ENCODE measurements at regions of chr15 and their contacts with region 1.

Region 1: DNA sequence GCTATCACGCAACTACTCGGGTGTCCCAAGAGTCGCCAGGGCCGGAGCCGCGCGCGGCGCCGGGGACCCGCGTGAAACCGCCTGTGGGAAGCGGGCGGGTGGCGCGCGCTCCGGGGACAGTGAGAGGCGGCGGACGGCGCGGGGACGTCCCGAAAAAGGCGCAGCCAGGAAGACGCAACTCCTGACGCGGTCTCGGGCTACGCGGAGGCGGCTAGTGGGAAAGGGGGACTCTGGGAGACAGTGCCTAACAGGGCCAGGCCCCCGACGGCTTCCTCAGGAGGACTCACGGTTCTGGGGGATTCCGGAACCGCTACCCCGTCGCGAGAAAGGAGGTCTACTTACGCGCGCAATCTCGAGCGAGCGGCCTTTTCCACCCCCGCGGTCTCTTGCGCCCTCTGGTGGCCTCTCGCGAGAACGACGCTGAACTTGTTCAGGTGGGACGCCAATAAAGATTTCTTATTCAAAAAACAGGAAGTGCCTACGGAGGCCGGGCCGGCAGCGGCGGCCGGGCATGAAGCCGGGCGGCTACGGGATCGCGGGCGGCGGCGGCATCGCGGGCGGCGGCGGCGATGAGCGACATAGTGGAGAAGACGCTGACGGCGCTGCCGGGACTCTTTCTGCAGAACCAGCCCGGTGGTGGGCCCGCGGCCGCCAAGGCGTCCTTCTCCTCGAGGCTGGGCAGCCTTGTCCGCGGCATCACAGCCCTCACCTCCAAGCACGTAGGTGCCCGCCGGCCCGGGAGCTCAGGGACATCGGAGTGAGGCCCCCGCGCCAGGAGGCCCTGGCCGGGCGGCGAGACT is at the start of gene AP4E1:
- DNase-seq: peak; percentile 91
- H3K4me3 Mint-ChIP-seq: peak within 1 kb of the TSS; percentile 96
- H3K27ac Mint-ChIP-seq: peak within 1 kb of the TSS; percentile 98
- H3K4me1 Mint-ChIP-seq: peaks cover 15% of the 10 kb centered on the region
- H3K27me3 Mint-ChIP-seq: peaks cover 2% of the 10 kb centered on the region
- total RNA-seq, gene AP4E1: 15.8 and 17.0 TPM in 2 replicates

Region 2: GRCh38 chr15:49155110-49155833 is 1753.1 kb before region 1 on chr15 and contains the start of gene COPS2:
- intact Hi-C with region 1: loop called (anchors 5 kb)
- DNase-seq: peak; percentile 93
- H3K4me3 Mint-ChIP-seq: peak within 1 kb of the TSS; percentile 99
- H3K27ac Mint-ChIP-seq: peak within 1 kb of the TSS; percentile 99
- H3K4me1 Mint-ChIP-seq: peaks cover 47% of the 10 kb centered on the region
- H3K27me3 Mint-ChIP-seq: peaks cover 3% of the 10 kb centered on the region
- total RNA-seq, gene COPS2: 99.7 and 105 TPM in 2 replicates

Region 3: GRCh38 chr15:50247819-50248655 is 660.4 kb before region 1 on chr15:
- intact Hi-C with region 1: loop called (anchors 5 kb)
- DNase-seq: peak; percentile 59
- H3K4me3 Mint-ChIP-seq: peak overlapping the region; percentile 67
- H3K27ac Mint-ChIP-seq: peak overlapping the region; percentile 97
- H3K4me1 Mint-ChIP-seq: peaks cover 65% of the 10 kb centered on the region
- H3K27me3 Mint-ChIP-seq: no peaks in the 10 kb centered on the region

Region 4: DNA sequence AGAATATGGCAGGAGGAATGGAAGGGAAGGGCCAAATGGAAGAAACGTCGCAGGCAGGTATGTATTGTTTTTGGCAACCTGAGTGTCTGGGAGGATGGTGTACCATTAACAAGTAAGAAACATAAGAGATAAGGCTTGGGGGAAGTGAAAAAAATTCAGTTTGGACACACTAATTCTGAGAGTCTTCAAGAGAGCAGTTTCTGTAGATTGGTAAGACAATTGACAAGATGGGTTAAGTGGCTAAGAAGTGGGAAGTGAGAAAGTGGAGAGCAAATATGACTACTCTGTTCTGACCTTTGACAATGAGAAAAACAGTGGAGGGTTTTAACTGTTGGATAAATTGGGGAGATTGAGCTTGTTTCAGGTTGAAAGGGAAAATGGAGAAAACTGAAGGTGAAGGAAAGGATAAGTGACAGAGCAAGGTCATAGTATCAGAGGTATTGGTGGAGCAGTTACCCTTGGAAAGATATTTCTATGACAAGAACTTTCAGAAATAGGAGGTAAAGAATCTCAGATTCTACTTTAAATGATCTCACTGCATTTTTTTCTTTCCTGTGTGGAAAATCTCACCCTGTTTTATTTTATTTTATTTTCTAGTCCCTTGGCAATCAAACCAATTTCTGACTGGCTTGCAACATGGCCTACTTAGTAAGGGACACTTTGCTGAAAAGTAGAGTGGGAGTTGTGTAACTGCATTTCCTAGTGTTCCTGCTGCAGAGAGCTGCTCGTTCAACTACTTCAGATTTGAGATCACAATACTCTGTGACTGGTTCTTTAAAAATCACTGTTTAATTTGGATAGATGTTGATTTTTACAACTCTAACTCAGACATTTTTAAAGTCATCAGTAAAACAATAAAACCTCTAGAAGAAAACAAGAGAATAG is 530.3 kb before region 1 on chr15:
- intact Hi-C with region 1: loop called (anchors 2 kb)
- DNase-seq: no peak
- H3K4me3 Mint-ChIP-seq: peak overlapping the region; percentile 44
- H3K27ac Mint-ChIP-seq: peak overlapping the region; percentile 92
- H3K4me1 Mint-ChIP-seq: peaks cover 18% of the 10 kb centered on the region
- H3K27me3 Mint-ChIP-seq: no peaks in the 10 kb centered on the region

Region 5: GRCh38 chr15:50562735-50563640 is 345.4 kb before region 1 on chr15:
- intact Hi-C with region 1: loop called (anchors 2 kb)
- DNase-seq: peak; percentile 8
- H3K4me3 Mint-ChIP-seq: peak overlapping the region; percentile 16
- H3K27ac Mint-ChIP-seq: peak overlapping the region; percentile 87
- H3K4me1 Mint-ChIP-seq: peaks cover 25% of the 10 kb centered on the region
- H3K27me3 Mint-ChIP-seq: no peaks in the 10 kb centered on the region

Region 6: GRCh38 chr15:50686468-50687301 is 221.7 kb before region 1 on chr15 and contains the start of gene TRPM7:
- intact Hi-C with region 1: loop called (anchors 1 kb)
- DNase-seq: peak; percentile 86
- H3K4me3 Mint-ChIP-seq: peak within 1 kb of the TSS; percentile 97
- H3K27ac Mint-ChIP-seq: peak within 1 kb of the TSS; percentile 98
- H3K4me1 Mint-ChIP-seq: peaks cover 47% of the 10 kb centered on the region
- H3K27me3 Mint-ChIP-seq: no peaks in the 10 kb centered on the region
- total RNA-seq, gene TRPM7: 42.4 and 43.6 TPM in 2 replicates

Region 7: GRCh38 chr15:50744601-50745000 is 163.8 kb before region 1 on chr15:
- intact Hi-C with region 1: no loop called
- DNase-seq: no peak
- H3K4me3 Mint-ChIP-seq: no peak overlapping the region
- H3K27ac Mint-ChIP-seq: no peak overlapping the region
- H3K4me1 Mint-ChIP-seq: peaks cover 4% of the 10 kb centered on the region
- H3K27me3 Mint-ChIP-seq: no peaks in the 10 kb centered on the region

Region 8: GRCh38 chr15:51737280-51738017 is 829.0 kb after region 1 on chr15 and contains the start of gene LYSMD2:
- intact Hi-C with region 1: loop called (anchors 10 kb)
- DNase-seq: peak; percentile 64
- H3K4me3 Mint-ChIP-seq: peak within 1 kb of the TSS; percentile 84
- H3K27ac Mint-ChIP-seq: peak within 1 kb of the TSS; percentile 85
- H3K4me1 Mint-ChIP-seq: peaks cover 44% of the 10 kb centered on the region
- H3K27me3 Mint-ChIP-seq: peaks cover 2% of the 10 kb centered on the region
- total RNA-seq, gene LYSMD2: 16.0 and 16.5 TPM in 2 replicates

Measured in activated T-helper 1 cell treated with anti-CD3 and anti-CD28 coated beads, Interleukin-12 subunit alpha, Interleukin-12 subunit beta, Interleukin-2, Interleukin-4 antibody, amounts not matched to agents 30 ng/mL and 10 ng/mL and 1 ng/mL, durations not matched to agents 14 hours and 24 hours and 36 hours (primary cell).